ENCODE measurements at regions of chr14 and their contacts with region 1.

Region 1: GRCh38 chr14:88189417-88190191 is 133.5 kb downstream of the KCNK10 start:
- DNase-seq: peak; percentile 62

Region 2: GRCh38 chr14:88013750-88014349 is 175.8 kb before region 1 on chr14:
- CTCF ChIA-PET with region 1: interaction called, 10 read pairs
- POLR2A ChIA-PET with region 1: no interaction called
- DNase-seq: peak; percentile 60

Region 3: GRCh38 chr14:88233915-88234314 is 44.3 kb after region 1 on chr14:
- CTCF ChIA-PET with region 1: interaction called, 15 read pairs
- POLR2A ChIA-PET with region 1: no interaction called
- DNase-seq: peak; percentile 32

Region 4: DNA sequence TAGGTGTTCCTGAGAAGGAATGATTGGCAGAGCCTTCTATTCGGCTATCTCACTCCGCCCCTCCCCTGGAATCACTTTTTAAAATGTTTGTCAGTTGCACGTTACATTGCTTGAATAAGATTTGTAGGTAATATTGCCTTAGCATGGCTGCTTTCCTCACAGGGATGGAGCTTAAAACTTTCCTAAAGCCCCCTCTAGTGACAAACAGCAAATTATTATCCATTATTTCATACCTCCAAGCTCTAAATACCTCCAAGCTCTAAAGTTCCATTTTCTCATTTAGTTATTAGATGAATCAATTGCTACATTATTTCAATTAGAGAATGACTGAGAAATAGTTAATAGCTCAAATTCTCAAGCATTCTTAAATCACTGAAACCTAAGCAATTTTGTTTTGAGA is 190.8 kb after region 1 on chr14:
- CTCF ChIA-PET with region 1: interaction called, 49 read pairs
- POLR2A ChIA-PET with region 1: interaction called, 3 read pairs
- DNase-seq: no peak

Measured in HEK293T (cell line).